ENCODE measurements at regions of chr3 and their contacts with region 1.

Region 1: GRCh38 chr3:186570096-186570940 is at the start of gene DNAJB11:
- DNase-seq: peak; percentile 91 to 100 (median 97)
- ATAC-seq: peak; percentile 83
- H3K4me3 ChIP-seq: peak within 1 kb of the TSS; percentile 79
- H3K4me3 Mint-ChIP-seq: peak within 1 kb of the TSS; percentile 99
- H3K27ac ChIP-seq: peak within 1 kb of the TSS; percentile 90 to 94
- H3K27ac Mint-ChIP-seq: peak within 1 kb of the TSS; percentile 94
- H3K4me1 ChIP-seq: peaks cover 37% of the 10 kb centered on the region
- H3K4me1 Mint-ChIP-seq: peaks cover 69% of the 10 kb centered on the region
- H3K27me3 ChIP-seq: no peaks in the 10 kb centered on the region
- H3K27me3 Mint-ChIP-seq: no peaks in the 10 kb centered on the region
- CTCF ChIP-seq: no peak
- total RNA-seq, gene DNAJB11: 69.3 to 70.3 TPM

Region 2: GRCh38 chr3:186583831-186584230 is 13.5 kb after region 1 on chr3:
- CTCF ChIA-PET with region 1: no interaction called
- POLR2A ChIA-PET with region 1: interaction called, 12 read pairs
- intact Hi-C with region 1: no loop called
- DNase-seq: no peak
- ATAC-seq: no peak
- H3K4me3 ChIP-seq: no peak overlapping the region
- H3K4me3 Mint-ChIP-seq: no peak overlapping the region
- H3K27ac ChIP-seq: no peak overlapping the region
- H3K27ac Mint-ChIP-seq: no peak overlapping the region
- H3K4me1 ChIP-seq: no peaks in the 10 kb centered on the region
- H3K4me1 Mint-ChIP-seq: no peaks in the 10 kb centered on the region
- H3K27me3 ChIP-seq: no peaks in the 10 kb centered on the region
- H3K27me3 Mint-ChIP-seq: no peaks in the 10 kb centered on the region
- CTCF ChIP-seq: no peak

Region 3: DNA sequence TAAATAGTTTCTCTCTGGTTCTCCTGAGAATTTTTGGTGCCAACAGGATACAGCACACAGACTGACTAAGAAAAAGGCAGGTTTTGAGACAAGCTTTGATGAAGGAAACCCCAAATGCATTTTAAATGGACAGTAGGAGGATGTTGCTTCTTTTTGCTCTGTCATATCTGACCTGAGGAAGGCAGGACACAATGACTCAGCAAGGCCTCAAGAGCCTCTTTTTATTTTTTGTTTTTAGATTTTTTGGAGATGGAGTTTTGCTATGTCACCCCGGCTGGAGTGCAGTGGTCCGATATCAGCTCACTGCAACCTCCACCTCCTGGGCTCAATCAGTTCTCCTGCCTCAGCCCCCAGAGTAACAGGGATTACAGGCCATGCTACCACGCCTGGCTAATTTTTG is 129.9 kb after region 1 on chr3:
- CTCF ChIA-PET with region 1: no interaction called
- POLR2A ChIA-PET with region 1: no interaction called
- intact Hi-C with region 1: no loop called
- DNase-seq: no peak
- ATAC-seq: no peak
- H3K4me3 ChIP-seq: no peak overlapping the region
- H3K4me3 Mint-ChIP-seq: no peak overlapping the region
- H3K27ac ChIP-seq: no peak overlapping the region
- H3K27ac Mint-ChIP-seq: no peak overlapping the region
- H3K4me1 ChIP-seq: no peaks in the 10 kb centered on the region
- H3K4me1 Mint-ChIP-seq: no peaks in the 10 kb centered on the region
- H3K27me3 ChIP-seq: no peaks in the 10 kb centered on the region
- H3K27me3 Mint-ChIP-seq: peaks cover 17% of the 10 kb centered on the region
- CTCF ChIP-seq: no peak

Region 4: DNA sequence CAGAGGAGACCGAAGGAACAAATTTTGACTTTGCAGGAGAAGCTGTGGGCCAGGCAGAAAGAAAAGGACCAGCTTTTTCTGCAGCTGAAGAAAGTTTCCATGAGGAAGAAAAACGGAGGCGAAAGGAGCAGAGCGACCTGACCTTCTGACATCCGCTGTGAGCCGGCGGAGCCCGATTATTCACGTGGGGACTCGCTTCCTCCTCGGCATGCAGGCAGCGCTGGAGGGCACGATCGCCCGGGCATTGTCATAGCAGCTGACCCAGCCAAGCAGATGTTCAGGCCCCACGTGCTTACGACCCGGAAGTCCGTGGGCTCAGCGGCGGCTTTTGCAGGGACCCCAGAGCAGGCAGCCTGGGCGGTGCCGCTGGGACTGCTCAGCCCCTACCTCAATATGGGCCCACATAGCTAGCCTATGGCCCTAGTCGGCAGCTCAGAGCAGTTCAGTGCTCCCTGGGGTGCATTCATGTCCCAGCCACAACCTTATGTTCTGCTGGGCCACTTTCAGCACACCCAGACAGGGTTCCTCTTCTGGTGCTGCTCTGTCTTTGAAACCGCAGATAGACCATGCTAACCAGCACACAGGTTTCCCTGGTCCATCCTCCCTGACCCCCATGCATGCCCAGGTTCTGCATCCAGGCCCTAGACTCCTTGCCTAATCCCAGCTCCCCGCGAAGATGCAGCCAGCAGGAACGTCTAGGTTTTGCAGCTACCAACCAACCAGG is 202.5 kb after region 1 on chr3:
- CTCF ChIA-PET with region 1: no interaction called
- POLR2A ChIA-PET with region 1: interaction called, 13 read pairs
- intact Hi-C with region 1: no loop called
- DNase-seq: peak; percentile 27 to 77 (median 52)
- ATAC-seq: peak; percentile 87
- H3K4me3 ChIP-seq: peak overlapping the region; percentile 82
- H3K4me3 Mint-ChIP-seq: peak overlapping the region; percentile 97
- H3K27ac ChIP-seq: peak overlapping the region; percentile 67 to 77
- H3K27ac Mint-ChIP-seq: peak overlapping the region; percentile 80
- H3K4me1 ChIP-seq: peaks cover 16% of the 10 kb centered on the region
- H3K4me1 Mint-ChIP-seq: peaks cover 19% of the 10 kb centered on the region
- H3K27me3 ChIP-seq: no peaks in the 10 kb centered on the region
- H3K27me3 Mint-ChIP-seq: no peaks in the 10 kb centered on the region
- CTCF ChIP-seq: no peak